ENCODE measurements at regions of chr17 and their contacts with region 1.

Region 1: DNA sequence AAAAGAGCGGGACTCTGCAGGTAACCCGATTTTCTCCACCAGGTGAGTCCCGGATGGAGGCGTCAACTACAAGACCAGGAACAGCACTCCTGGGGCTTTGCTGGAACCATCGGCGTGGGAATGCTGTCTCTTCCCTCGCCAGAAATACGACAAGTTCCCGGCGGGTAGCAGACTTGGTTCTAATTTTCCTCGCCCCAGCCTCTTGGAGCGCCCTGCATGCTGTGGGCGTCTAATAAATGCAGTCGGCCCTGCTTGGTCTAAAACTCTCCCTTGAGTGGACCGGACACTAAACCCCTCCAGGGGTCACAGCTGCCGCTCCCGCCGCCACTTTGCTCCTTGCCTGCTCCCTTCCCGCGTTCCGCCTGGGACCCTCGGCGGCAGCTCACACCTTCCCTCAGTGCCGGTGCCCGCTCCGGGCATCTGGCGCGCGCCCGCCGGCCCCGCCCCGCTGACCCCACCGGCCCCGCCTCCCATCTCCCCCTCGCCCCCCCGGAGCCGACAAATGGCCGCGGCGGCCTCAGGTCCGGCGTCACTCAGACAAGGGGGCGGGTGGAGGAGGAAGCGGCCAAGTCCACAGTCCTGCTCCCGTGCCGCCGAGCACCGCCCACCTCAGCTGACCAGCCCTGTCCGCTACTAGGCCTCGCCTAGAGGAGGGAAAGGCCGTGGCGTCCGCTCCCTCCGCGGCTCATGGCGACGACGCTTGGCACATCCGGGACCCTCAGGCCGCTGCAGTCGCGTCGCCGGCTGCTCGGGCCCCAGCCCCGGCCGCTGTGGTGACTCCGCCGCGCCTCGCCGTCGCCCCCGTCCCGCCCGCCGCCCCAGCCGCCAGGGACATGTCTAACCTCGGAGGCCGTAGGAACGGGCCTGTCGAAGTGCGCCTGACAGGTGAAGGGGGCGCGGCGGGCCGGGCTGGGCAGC is 65.8 kb downstream of the KPNA2 start:
- DNase-seq: peak; percentile 63
- H3K4me3 Mint-ChIP-seq: peak overlapping the region; percentile 90
- H3K27ac Mint-ChIP-seq: peak overlapping the region; percentile 48
- H3K4me1 Mint-ChIP-seq: peaks cover 25% of the 10 kb centered on the region
- H3K27me3 Mint-ChIP-seq: no peaks in the 10 kb centered on the region

Region 2: DNA sequence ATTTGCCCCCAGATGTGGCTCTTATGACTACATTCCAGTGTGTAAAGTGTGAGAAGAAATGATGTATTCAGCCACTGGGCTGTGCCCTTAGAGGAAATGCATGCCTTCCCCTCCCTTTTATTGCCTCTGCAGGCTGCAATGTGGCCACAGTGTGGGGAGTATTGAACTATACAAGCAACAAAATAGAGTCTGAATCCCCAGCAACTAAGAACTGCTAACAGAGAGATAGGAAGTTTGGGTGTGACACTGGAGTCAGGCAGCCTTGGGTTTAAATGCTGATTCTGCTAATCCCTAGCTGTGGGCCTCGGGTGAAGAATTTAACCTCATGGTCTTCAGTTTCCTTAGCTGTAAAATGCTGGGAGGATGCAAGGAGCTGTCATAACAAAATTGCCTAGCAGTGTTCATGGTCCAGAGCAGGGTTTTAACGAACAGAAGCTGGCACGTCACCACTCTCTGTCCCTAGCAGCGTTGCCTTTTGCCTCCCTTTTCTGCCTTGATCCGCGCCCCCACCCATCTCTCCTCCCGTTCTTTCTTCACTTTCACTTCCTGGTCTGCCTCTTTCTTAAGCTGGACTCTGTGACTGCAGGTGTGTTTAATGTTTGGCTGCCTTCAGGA is 15.5 kb before region 1 on chr17:
- CTCF ChIA-PET with region 1: no interaction called
- intact Hi-C with region 1: loop called (anchors 2 kb)
- DNase-seq: no peak
- H3K4me3 Mint-ChIP-seq: peak overlapping the region; percentile 36
- H3K27ac Mint-ChIP-seq: no peak overlapping the region
- H3K4me1 Mint-ChIP-seq: peaks cover 34% of the 10 kb centered on the region
- H3K27me3 Mint-ChIP-seq: no peaks in the 10 kb centered on the region

Region 3: GRCh38 chr17:68169828-68170227 is 68.5 kb after region 1 on chr17:
- CTCF ChIA-PET with region 1: no interaction called
- intact Hi-C with region 1: no loop called
- DNase-seq: no peak
- H3K4me3 Mint-ChIP-seq: no peak overlapping the region
- H3K27ac Mint-ChIP-seq: no peak overlapping the region
- H3K4me1 Mint-ChIP-seq: peaks cover 22% of the 10 kb centered on the region
- H3K27me3 Mint-ChIP-seq: no peaks in the 10 kb centered on the region

Region 4: DNA sequence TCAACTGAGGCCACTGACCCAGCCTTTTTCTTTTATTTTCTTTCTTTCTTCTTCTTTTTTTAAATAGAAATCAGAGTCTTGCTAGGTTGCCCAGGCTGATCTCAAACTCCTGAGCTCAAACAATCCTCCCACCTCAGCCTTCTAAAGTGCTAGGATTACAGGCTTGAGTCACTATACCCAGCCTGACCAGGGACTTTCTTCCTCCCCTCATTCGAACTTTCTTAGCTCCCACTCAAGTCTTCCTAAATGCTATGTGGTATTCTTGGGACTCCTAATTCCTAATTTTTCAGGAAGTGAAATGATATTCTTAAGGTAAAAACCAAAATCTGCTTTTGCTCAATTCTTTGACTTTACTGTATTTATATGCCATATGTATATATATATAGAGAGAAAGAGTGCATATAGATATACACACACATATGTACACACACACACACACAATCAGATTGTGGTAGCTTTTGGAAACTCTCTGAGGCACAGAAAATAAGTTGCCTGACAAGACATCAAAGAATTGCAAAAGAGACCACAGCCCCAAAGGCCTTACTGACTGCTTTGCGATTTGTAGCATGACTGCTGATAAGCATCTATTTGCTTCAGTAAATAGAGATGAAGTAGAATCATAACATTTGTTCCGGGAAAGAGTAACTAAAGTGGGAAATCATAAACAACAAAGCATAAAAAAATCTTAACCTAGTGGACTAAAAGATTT is 137.0 kb after region 1 on chr17:
- CTCF ChIA-PET with region 1: no interaction called
- intact Hi-C with region 1: loop called (anchors 5 kb)
- DNase-seq: no peak
- H3K4me3 Mint-ChIP-seq: peak overlapping the region; percentile 74
- H3K27ac Mint-ChIP-seq: peak overlapping the region; percentile 94
- H3K4me1 Mint-ChIP-seq: peaks cover 54% of the 10 kb centered on the region
- H3K27me3 Mint-ChIP-seq: no peaks in the 10 kb centered on the region

Region 5: DNA sequence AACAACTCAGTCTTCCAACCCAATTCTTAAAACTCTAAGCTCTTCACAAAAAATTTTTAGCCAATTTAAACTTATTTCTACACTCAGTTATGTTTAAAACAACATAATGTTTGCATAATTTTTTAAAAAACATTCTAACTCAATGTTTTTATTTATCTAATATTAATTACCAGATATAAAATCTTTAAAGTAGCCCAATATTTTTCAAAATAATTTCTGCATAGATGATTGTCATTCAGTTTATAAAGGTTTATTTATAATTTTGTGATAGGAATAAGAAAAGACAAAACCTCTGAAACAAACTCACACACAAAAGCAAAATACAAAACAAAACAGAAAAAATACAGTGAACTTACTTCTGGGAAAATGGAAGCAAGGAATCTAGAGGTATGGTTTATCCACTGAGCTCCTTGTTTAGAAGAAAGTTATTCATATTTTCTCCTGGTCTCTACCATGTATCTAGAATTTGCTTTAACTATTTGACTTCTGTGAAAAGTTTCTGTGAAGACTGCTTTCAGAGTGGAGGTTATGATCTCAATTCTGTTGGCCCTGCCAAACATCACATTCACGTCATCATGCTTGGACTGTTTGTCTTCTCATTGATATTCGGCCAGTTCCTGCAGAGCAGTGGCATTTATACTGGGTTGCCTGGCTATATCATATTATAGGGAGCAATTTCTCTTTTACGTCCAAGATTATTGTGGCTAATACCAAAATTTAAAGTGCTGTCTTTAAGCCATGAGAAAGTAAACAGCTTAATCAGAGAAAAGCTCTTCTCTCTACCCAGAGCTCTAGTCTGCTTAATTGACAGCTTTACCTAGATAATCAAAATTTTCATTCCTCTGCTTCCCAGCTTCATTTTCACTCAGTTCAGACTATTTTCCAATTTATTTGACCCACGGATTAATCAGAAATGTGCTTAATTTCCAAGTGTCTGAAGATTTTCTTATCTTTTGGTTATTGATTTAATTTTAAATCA is 853.8 kb after region 1 on chr17 and contains the start of gene ABCA8:
- CTCF ChIA-PET with region 1: no interaction called
- intact Hi-C with region 1: no loop called
- DNase-seq: no peak
- H3K4me3 Mint-ChIP-seq: no peak within 1 kb of the TSS
- H3K27ac Mint-ChIP-seq: no peak within 1 kb of the TSS
- H3K4me1 Mint-ChIP-seq: no peaks in the 10 kb centered on the region
- H3K27me3 Mint-ChIP-seq: peaks cover 3% of the 10 kb centered on the region
- total RNA-seq, gene ABCA8: not detected

Measured in activated naive CD4-positive, alpha-beta T cell treated with anti-CD3 and anti-CD28 coated beads for 36 hours (primary cell).